ENCODE measurements at regions of chr9 and their contacts with region 1.

Region 1: GRCh38 chr9:33167046-33167808 is at the start of gene B4GALT1:
- DNase-seq: peak; percentile 99
- ATAC-seq: peak; percentile 83
- H3K4me3 Mint-ChIP-seq: peak within 1 kb of the TSS; percentile 95
- H3K27ac Mint-ChIP-seq: peak within 1 kb of the TSS; percentile 97
- H3K4me1 Mint-ChIP-seq: peaks cover 50% of the 10 kb centered on the region
- H3K27me3 Mint-ChIP-seq: no peaks in the 10 kb centered on the region
- total RNA-seq, gene B4GALT1: 44.5 to 47.1 TPM

Region 2: DNA sequence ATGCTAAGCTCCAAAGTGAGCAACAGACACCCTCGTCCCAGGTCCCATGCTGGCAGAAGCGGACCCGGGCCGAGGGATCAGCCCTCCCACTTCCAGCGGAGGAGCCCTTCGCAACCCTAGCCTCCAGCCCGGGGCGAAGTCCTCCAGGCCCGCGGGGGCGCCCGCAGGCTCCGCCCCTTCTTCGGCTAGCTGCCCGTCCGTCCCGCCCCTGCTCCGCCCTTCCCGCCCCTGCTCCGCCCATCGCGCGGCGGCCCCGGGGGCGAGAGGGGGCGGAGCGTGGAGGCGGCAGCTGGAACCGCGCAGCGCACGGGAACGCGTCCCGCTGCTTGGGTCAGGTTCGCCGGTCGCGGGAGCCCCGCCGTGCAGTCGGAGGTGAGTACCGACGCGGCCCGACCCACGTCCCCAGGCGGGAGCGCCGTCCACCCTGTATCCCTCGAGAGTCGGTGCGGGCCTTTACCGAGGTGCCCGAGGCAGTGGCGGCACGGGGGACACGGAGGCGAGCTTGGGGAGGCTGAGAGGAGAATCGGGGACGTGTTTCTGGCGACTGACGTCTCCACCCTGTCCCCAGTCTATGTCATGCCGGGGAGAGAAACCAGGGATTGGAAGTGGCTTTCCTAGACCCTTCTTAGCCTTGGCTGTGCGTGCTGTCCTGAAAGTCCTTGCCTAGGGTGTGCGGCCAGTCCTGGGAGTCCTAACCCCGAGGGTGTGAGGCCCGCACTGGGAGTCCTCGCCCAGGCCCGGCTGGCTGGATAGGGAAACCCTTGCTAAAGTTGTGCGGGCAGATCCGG is 782.7 kb before region 1 on chr9 and contains the start of gene ACO1:
- CTCF ChIA-PET with region 1: no interaction called
- POLR2A ChIA-PET with region 1: no interaction called
- intact Hi-C with region 1: loop called in 1 of 2 experiments (anchors 5 kb)
- DNase-seq: peak; percentile 90
- ATAC-seq: peak; percentile 93
- H3K4me3 Mint-ChIP-seq: peak within 1 kb of the TSS; percentile 78
- H3K27ac Mint-ChIP-seq: peak within 1 kb of the TSS; percentile 16
- H3K4me1 Mint-ChIP-seq: peaks cover 12% of the 10 kb centered on the region
- H3K27me3 Mint-ChIP-seq: peaks cover 16% of the 10 kb centered on the region
- total RNA-seq, gene ACO1: 15.5 TPM

Region 3: DNA sequence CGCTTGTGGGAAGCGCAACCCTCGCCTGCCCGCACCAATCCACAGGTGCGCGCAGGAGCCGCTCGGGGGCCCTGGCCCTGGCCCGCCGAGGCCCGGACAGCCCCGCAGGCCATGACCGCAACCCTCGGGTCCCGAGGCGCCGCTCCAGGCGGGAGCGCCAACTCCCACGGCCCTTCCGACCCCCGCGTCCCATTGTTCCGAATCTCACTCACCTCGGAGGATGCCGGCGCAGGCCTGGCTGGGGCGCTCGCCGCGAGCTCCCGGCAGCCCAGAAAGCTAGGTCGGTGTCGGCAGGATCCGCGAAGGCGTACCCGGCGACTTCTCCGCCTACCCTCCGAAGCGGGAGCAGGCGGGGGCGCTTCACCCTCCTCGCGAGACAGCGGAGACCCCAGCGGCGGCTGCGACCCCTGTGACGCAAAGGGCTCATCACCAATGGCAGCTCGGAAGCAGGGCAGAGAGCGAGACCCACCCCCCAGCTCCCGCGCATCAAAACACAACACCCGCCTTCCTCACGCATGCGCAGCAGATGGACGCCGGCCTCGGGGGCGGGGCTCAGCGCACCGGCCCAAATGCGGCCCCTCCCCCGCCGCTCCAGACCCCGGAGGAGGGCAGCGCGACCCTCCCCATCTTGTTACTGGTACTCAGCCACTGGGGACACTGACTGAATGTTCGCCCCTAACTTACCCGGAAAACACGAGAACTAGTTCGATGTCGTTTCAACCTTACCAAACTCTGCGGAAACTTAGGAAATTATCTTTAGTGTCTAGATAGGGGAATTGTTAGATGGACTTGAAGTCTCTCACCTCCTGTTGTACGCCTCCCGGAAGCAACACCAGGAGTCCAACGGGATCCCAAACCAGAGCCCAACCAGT is 616.4 kb before region 1 on chr9:
- CTCF ChIA-PET with region 1: no interaction called
- POLR2A ChIA-PET with region 1: interaction called, 3 read pairs
- intact Hi-C with region 1: loop called (anchors 1 to 10 kb)
- DNase-seq: peak; percentile 95
- ATAC-seq: peak; percentile 74
- H3K4me3 Mint-ChIP-seq: peak overlapping the region; percentile 96
- H3K27ac Mint-ChIP-seq: peak overlapping the region; percentile 99
- H3K4me1 Mint-ChIP-seq: peaks cover 47% of the 10 kb centered on the region
- H3K27me3 Mint-ChIP-seq: no peaks in the 10 kb centered on the region

Region 4: GRCh38 chr9:33076358-33077004 is 90.7 kb before region 1 on chr9 and contains the start of gene SMU1:
- CTCF ChIA-PET with region 1: interaction called, 6 read pairs
- POLR2A ChIA-PET with region 1: interaction called, 3 read pairs
- intact Hi-C with region 1: loop called (anchors 1 kb)
- DNase-seq: peak; percentile 98
- ATAC-seq: peak; percentile 93
- H3K4me3 Mint-ChIP-seq: peak within 1 kb of the TSS; percentile 100
- H3K27ac Mint-ChIP-seq: peak within 1 kb of the TSS; percentile 100
- H3K4me1 Mint-ChIP-seq: peaks cover 39% of the 10 kb centered on the region
- H3K27me3 Mint-ChIP-seq: no peaks in the 10 kb centered on the region
- total RNA-seq, gene SMU1: 23.2 to 29.6 TPM

Region 5: DNA sequence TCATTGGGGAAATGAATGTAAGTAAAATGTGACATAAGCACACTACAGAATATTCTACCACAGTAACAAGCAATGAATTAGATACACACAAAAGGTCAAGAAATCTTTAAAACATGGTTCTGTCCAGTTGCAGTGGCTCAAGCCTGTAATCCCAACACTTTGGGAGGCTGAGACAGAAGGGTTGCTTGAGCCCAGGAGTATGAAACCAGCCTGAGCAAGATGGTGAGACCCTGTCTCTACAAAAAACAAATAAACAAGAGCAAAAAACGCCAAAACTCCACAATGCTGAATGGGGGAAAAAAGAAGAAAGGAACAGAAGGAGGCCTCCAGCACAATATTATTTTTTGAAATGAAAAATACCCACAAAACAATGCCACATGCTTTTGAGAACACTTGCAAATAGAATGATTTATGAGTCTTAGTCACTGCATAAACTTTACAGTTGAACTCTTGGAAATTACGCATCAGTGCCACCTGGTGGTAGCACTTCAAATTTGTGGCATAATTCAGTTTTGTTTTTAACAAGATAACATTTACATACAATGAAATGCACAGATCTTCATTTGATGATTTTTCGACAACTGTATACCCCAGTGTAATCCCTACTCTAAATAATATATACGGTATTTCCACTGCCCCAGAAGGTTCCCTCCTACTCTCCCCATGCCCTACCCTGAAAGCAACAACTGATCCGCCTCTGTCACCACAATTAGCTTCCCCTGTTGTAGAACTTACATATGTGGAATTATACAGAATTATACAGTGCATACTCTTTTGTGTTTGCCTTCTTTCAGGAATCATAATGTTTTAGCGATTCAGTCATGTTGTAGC is 58.3 kb after region 1 on chr9:
- CTCF ChIA-PET with region 1: interaction called, 6 read pairs
- POLR2A ChIA-PET with region 1: no interaction called
- intact Hi-C with region 1: loop called (anchors 1 to 5 kb)
- DNase-seq: peak; percentile 85
- ATAC-seq: peak; percentile 82
- H3K4me3 Mint-ChIP-seq: no peak overlapping the region
- H3K27ac Mint-ChIP-seq: peak overlapping the region; percentile 38
- H3K4me1 Mint-ChIP-seq: peaks cover 16% of the 10 kb centered on the region
- H3K27me3 Mint-ChIP-seq: no peaks in the 10 kb centered on the region

Region 6: DNA sequence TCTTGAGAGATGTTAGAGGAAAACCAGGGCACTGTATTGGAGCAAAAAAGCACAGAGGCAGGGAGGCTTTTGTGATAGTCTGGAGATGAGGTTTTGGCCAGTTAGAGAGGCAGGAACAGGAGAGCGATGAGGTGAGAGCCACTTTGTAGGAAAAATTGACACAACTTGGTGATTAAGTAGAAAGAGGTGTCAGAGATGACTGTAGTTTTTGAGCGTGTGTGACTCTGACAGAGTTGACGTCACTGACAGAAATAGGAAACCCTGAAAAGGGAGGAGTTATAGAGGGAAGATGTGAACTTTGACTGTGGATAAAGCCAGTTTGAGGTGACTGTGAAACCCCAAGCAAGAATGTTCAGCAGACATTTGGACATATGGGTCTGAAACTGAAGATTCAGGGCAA is 138.8 kb after region 1 on chr9:
- CTCF ChIA-PET with region 1: no interaction called
- POLR2A ChIA-PET with region 1: no interaction called
- intact Hi-C with region 1: loop called in 1 of 2 experiments (anchors 5 kb)
- DNase-seq: peak; percentile 59
- ATAC-seq: peak; percentile 94
- H3K4me3 Mint-ChIP-seq: no peak overlapping the region
- H3K27ac Mint-ChIP-seq: no peak overlapping the region
- H3K4me1 Mint-ChIP-seq: peaks cover 29% of the 10 kb centered on the region
- H3K27me3 Mint-ChIP-seq: no peaks in the 10 kb centered on the region

Region 7: GRCh38 chr9:34458013-34458958 is 1291.1 kb after region 1 on chr9 and contains the starts of genes DNAI1 and FAM219A:
- CTCF ChIA-PET with region 1: no interaction called
- POLR2A ChIA-PET with region 1: no interaction called
- intact Hi-C with region 1: loop called in 1 of 2 experiments (anchors 10 kb)
- DNase-seq: peak; percentile 99
- ATAC-seq: peak; percentile 92
- H3K4me3 Mint-ChIP-seq: peak within 1 kb of the TSS; percentile 84
- H3K27ac Mint-ChIP-seq: peak within 1 kb of the TSS; percentile 75
- H3K4me1 Mint-ChIP-seq: peaks cover 45% of the 10 kb centered on the region
- H3K27me3 Mint-ChIP-seq: peaks cover 9% of the 10 kb centered on the region
- total RNA-seq, gene DNAI1: 0.34 TPM in 1 of 2 experiments, not detected in the other
- total RNA-seq, gene FAM219A: 9.7 to 12.9 TPM

Measured in activated CD4-positive, alpha-beta T cell treated with anti-CD3 and anti-CD28 coated beads for 36 hours (primary cell).